ENCODE measurements at regions of chr1 and their contacts with region 1.

Region 1: GRCh38 chr1:204162231-204163074 is 3.7 kb downstream of the REN start:
- DNase-seq: peak; percentile 70
- ATAC-seq: peak; percentile 98
- H3K4me3 ChIP-seq: no peak overlapping the region
- H3K27ac ChIP-seq: no peak overlapping the region
- H3K4me1 ChIP-seq: peaks cover 0 to 15% of the 10 kb centered on the region in 2 experiments; a peak in 2 of 4 replicates
- H3K27me3 ChIP-seq: no peaks in the 10 kb centered on the region
- CTCF ChIP-seq: peak; percentile 98 to 99 (median 99)
- POLR2A ChIP-seq: no peak
- RAD21 ChIP-seq: peak; percentile 100

Region 2: DNA sequence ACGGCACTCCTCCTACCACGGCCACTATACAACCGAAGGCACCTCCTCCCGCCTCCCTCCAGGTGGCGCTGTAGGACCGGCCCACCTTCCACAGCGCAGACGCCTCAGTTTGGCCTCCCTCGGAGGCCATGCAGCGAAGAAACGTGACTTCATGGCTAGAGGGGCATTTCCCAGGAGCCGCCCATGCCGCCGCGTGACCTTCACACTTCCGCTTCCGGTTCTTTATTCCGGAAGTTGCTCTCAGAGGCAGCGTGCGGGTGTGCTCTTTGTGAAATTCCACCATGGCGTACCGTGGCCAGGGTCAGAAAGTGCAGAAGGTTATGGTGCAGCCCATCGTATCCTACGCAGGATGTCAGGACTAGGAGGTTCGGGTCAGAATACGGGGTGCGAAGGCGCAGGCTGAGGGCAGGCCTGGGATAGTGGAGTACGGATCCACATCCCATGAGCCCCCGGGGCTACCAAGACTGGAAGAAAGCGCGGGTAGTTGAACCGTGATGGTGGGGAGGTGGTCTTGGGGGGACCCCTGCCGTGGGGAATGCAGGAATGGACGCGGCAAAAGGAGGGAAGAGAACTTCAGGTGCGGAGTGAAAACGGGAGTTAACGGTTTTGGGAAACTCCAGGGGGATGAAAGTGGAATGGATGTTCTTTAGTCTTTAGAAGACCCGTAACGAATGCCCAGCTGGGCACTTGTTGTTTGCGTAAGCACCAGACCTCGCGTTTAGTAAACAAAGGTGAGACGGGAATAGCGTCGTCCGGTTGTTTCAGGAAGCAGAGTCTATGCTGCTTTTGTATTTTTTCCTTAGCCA is 300.9 kb before region 1 on chr1 and contains the start of gene SNRPE:
- CTCF ChIA-PET with region 1: interaction called, 9 read pairs
- POLR2A ChIA-PET with region 1: no interaction called
- RAD21 ChIA-PET with region 1: interaction called in 1 of 2 experiments, 3 read pairs
- intact Hi-C with region 1: loop called (anchors 1 kb)
- DNase-seq: peak; percentile 98
- ATAC-seq: peak; percentile 98
- H3K4me3 ChIP-seq: peak within 1 kb of the TSS; percentile 78 to 90
- H3K27ac ChIP-seq: peak within 1 kb of the TSS; percentile 78
- H3K4me1 ChIP-seq: peaks cover 4 to 20% of the 10 kb centered on the region in 2 experiments; a peak in 3 of 4 replicates
- H3K27me3 ChIP-seq: no peaks in the 10 kb centered on the region
- CTCF ChIP-seq: peak; percentile 84 to 97 (median 92)
- POLR2A ChIP-seq: peak; percentile 52
- RAD21 ChIP-seq: peak; percentile 98
- total RNA-seq, gene SNRPE: 288 TPM

Region 3: GRCh38 chr1:204128964-204129896 is 33.2 kb before region 1 on chr1:
- CTCF ChIA-PET with region 1: interaction called, 18 read pairs
- POLR2A ChIA-PET with region 1: no interaction called
- RAD21 ChIA-PET with region 1: no interaction called
- intact Hi-C with region 1: no loop called
- DNase-seq: no peak
- ATAC-seq: peak; percentile 85
- H3K4me3 ChIP-seq: no peak overlapping the region
- H3K27ac ChIP-seq: no peak overlapping the region
- H3K4me1 ChIP-seq: peaks cover 21 to 45% of the 10 kb centered on the region in 2 experiments
- H3K27me3 ChIP-seq: no peaks in the 10 kb centered on the region
- CTCF ChIP-seq: peak; percentile 63 to 86 (median 81)
- POLR2A ChIP-seq: no peak
- RAD21 ChIP-seq: peak; percentile 84

Region 4: GRCh38 chr1:204198151-204198994 is 35.9 kb after region 1 on chr1:
- CTCF ChIA-PET with region 1: interaction called, 28 read pairs
- POLR2A ChIA-PET with region 1: no interaction called
- RAD21 ChIA-PET with region 1: interaction called, 3 to 5 read pairs
- intact Hi-C with region 1: loop called (anchors 2 kb)
- DNase-seq: peak; percentile 59
- ATAC-seq: peak; percentile 87
- H3K4me3 ChIP-seq: peak overlapping the region in 1 of 2 experiments; percentile 31; a peak in 1 of 4 replicates
- H3K27ac ChIP-seq: peak overlapping the region; percentile 12; the same call in 1 of the 2 replicates
- H3K4me1 ChIP-seq: peaks cover 15 to 47% of the 10 kb centered on the region in 2 experiments
- H3K27me3 ChIP-seq: no peaks in the 10 kb centered on the region
- CTCF ChIP-seq: peak; percentile 25 to 51 (median 34); a peak in 4 of 6 replicates
- POLR2A ChIP-seq: no peak
- RAD21 ChIP-seq: peak; percentile 80

Region 5: GRCh38 chr1:204257954-204258752 is 95.7 kb after region 1 on chr1:
- CTCF ChIA-PET with region 1: interaction called, 5 read pairs
- POLR2A ChIA-PET with region 1: no interaction called
- RAD21 ChIA-PET with region 1: no interaction called
- intact Hi-C with region 1: loop called (anchors 5 kb)
- DNase-seq: peak; percentile 37
- ATAC-seq: peak; percentile 97
- H3K4me3 ChIP-seq: no peak overlapping the region
- H3K27ac ChIP-seq: no peak overlapping the region
- H3K4me1 ChIP-seq: no peaks in the 10 kb centered on the region
- H3K27me3 ChIP-seq: no peaks in the 10 kb centered on the region
- CTCF ChIP-seq: peak; percentile 85 to 93 (median 91)
- POLR2A ChIP-seq: no peak
- RAD21 ChIP-seq: peak; percentile 88

Region 6: DNA sequence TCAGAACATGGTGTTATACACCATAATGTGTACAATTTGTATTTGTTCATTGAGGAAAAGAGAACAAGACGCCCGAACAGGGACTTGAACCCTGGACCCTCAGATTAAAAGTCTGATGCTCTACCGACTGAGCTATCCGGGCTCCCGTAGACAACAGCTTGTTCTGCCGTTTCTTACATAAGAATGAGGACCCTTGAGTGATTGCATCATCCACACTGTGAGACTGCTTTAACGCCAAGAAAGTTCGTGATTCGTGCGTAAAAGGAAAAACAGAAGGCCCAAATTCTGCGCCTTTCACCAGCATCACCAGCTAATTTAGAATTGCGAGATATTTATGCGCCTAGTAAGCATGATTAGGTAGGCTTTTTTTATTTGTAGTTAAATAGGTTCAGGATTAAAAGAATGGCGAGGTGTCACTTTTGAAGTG is 344.5 kb after region 1 on chr1:
- CTCF ChIA-PET with region 1: interaction called, 5 read pairs
- POLR2A ChIA-PET with region 1: no interaction called
- RAD21 ChIA-PET with region 1: interaction called in 1 of 2 experiments, 3 read pairs
- intact Hi-C with region 1: loop called (anchors 2 kb)
- DNase-seq: peak; percentile 87
- ATAC-seq: peak; percentile 82
- H3K4me3 ChIP-seq: peak overlapping the region; percentile 7 to 38; a peak in 3 of 4 replicates
- H3K27ac ChIP-seq: peak overlapping the region; percentile 60
- H3K4me1 ChIP-seq: peaks cover 30 to 47% of the 10 kb centered on the region in 2 experiments
- H3K27me3 ChIP-seq: no peaks in the 10 kb centered on the region
- CTCF ChIP-seq: no peak
- POLR2A ChIP-seq: no peak
- RAD21 ChIP-seq: no peak

Measured in HCT116 (cell line).